ENCODE measurements at regions of chr15 and their contacts with region 1.

Region 1: GRCh38 chr15:71780115-71780976 is 30.0 kb upstream of the NR2E3 start:
- DNase-seq: peak in 8 of 14 experiments; percentile 9 to 63 (median 24)
- ATAC-seq: peak; percentile 46
- H3K4me3 ChIP-seq: no peak overlapping the region
- H3K4me3 Mint-ChIP-seq: no peak overlapping the region
- H3K27ac ChIP-seq: no peak overlapping the region
- H3K27ac Mint-ChIP-seq: no peak overlapping the region
- H3K4me1 ChIP-seq: peaks cover 4% of the 10 kb centered on the region
- H3K4me1 Mint-ChIP-seq: peaks cover 6% of the 10 kb centered on the region
- H3K27me3 ChIP-seq: no peaks in the 10 kb centered on the region
- H3K27me3 Mint-ChIP-seq: peaks cover 20% of the 10 kb centered on the region
- CTCF ChIP-seq: peak; percentile 85

Region 2: GRCh38 chr15:72155635-72156616 is 375.6 kb after region 1 on chr15:
- CTCF ChIA-PET with region 1: interaction called, 6 read pairs
- POLR2A ChIA-PET with region 1: no interaction called
- intact Hi-C with region 1: loop called (anchors 1 kb)
- DNase-seq: peak; percentile 70 to 87 (median 77)
- ATAC-seq: peak; percentile 67
- H3K4me3 ChIP-seq: peak overlapping the region; percentile 43
- H3K4me3 Mint-ChIP-seq: peak overlapping the region; percentile 83
- H3K27ac ChIP-seq: no peak overlapping the region
- H3K27ac Mint-ChIP-seq: no peak overlapping the region
- H3K4me1 ChIP-seq: peaks cover 7% of the 10 kb centered on the region
- H3K4me1 Mint-ChIP-seq: peaks cover 8% of the 10 kb centered on the region
- H3K27me3 ChIP-seq: no peaks in the 10 kb centered on the region
- H3K27me3 Mint-ChIP-seq: no peaks in the 10 kb centered on the region
- CTCF ChIP-seq: peak; percentile 93